ENCODE measurements at regions of chr7 and their contacts with region 1.

Region 1: GRCh38 chr7:129611246-129612111 is at the start of gene NRF1:
- DNase-seq: peak; percentile 56 to 95 (median 88)

Region 2: DNA sequence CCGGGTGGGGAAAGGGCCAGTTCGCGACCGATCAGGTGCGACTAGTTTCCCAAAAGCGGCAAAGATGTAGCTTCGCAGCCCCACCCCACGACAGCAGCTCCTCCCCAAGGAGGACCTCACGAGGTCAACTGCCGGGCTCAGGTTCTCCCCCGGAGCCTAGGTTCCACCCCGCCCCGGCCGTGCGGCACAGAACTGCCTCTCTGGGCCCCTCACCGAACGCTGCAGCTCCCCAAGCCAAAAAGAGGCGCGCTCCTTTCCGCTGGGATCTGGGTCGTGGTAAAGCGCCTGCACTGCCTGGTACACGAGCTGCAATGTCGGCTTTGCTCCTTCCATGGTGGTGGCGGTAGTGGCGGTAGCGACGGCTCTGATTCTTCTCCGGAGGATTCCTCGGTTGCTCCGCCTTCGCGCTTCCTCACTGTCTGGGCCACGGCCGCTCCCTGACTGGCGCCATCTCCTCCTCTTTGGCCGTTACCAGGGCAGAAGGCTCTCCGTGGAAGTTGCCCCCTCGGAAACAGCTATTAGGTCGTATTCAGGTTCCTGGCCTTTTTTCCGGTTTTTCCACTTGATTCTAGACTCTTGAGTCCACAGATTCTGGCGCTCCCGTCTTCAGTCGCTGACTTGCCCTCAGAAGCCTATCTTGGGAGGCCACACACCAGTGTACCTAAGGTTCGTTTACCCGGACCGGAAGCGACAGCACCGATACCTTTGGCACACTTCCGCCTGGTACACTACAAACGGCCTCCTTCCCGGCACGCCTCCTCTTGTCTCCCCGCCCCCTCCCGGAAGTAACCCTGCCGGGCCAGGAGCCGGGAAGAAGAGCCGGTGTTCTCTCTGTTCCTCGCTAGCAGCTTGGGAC is 556.8 kb before region 1 on chr7 and contains the start of gene TNPO3:
- intact Hi-C with region 1: loop called (anchors 10 kb)
- DNase-seq: peak; percentile 89 to 97 (median 94)

Region 3: GRCh38 chr7:129224251-129225205 is 387.0 kb before region 1 on chr7 and contains the start of gene AHCYL2:
- intact Hi-C with region 1: loop called (anchors 10 kb)
- DNase-seq: peak; percentile 94 to 100 (median 98)

Region 4: DNA sequence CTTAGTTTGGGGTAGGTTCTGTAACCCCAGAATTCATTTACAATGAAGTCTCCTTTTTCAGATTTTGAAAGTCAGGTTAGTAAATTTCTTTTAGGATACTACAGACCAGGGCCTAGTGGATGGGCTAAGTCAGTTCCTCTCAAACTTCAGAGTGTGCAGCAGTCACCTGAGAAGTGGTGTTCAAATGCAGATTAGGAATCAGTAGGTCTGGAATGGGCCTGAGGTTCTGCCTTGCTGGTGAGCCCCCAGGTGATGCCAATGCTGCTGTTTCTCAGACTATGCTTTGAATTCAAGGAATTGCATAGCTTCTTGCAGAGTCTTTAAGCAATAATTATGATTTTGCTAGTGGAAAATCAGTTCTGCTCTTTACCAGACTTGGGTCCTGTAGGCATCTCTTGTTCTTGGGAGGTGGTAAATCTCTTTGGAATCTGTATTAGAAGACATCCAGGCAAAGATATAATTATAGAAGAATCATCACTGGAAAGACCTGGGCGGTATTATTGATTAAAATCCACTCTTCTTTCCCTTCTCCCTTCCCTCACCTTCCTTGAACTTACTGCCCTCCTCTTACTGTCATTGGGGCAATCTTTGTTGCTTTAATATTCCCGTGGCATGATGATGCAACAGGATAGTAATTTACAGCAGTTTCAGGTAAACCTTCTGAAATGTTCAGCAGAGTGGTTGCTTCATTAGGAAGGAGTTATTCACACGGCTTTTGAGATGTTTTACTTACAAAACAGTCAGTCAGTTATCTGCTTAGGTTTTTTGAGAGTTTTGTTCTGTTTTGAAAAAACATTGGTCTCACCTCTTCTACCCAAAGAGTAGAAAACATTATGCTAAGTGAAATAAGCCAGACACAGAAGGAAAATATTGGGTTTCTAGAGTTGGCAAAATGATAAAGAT is 87.3 kb after region 1 on chr7:
- intact Hi-C with region 1: no loop called
- DNase-seq: no peak

Region 5: GRCh38 chr7:129952653-129953560 is 341.4 kb after region 1 on chr7 and contains the start of gene UBE2H:
- intact Hi-C with region 1: loop called (anchors 5 kb)
- DNase-seq: peak; percentile 87 to 98 (median 96)